HEK293 (cell line): ENCODE measurements at regions of chr5 and their contacts with region 1.

Region 1: DNA sequence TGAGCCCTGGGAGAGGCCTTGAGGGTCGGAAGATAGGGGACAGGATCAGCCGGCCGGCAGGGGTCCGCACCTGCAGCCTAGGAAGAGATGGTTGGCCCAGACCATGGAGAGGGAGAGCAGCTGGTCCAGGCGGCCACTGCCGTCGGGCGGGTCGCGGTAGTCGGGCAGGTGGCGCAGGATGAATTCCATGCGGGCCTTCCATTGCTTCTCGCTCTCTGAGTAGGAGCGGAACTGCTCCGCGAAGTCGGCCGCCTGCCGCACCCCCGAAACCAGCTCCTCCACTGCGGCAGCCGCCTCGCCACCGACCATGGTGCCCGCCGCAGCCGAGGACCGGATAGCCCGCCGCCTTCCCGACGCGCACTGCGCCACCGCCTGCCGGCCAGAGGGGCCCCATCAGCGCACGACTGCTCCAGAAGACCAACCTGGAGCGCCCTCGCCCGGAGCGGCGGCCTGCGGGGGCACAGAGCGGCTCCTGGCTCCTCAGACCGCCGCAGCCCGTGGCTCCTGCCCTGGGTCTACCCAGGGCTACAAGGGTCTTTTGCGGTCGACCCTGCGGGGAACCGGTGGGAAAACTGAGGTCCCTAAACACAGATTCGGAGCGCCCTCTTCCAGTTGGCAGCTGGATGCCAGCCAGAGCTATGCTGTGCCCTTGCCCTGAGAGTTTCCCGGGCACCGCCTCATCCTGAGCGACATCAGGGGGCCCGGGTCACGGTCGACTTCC is at the start of gene CDKN2AIPNL:
- H3K4me3 ChIP-seq: peak within 1 kb of the TSS; percentile 91
- H3K27ac ChIP-seq: peak within 1 kb of the TSS; percentile 63; the same call in 1 of the 2 replicates
- H3K4me1 ChIP-seq: peaks cover 10% of the 10 kb centered on the region
- CTCF ChIP-seq: peak; percentile 97

Region 2: DNA sequence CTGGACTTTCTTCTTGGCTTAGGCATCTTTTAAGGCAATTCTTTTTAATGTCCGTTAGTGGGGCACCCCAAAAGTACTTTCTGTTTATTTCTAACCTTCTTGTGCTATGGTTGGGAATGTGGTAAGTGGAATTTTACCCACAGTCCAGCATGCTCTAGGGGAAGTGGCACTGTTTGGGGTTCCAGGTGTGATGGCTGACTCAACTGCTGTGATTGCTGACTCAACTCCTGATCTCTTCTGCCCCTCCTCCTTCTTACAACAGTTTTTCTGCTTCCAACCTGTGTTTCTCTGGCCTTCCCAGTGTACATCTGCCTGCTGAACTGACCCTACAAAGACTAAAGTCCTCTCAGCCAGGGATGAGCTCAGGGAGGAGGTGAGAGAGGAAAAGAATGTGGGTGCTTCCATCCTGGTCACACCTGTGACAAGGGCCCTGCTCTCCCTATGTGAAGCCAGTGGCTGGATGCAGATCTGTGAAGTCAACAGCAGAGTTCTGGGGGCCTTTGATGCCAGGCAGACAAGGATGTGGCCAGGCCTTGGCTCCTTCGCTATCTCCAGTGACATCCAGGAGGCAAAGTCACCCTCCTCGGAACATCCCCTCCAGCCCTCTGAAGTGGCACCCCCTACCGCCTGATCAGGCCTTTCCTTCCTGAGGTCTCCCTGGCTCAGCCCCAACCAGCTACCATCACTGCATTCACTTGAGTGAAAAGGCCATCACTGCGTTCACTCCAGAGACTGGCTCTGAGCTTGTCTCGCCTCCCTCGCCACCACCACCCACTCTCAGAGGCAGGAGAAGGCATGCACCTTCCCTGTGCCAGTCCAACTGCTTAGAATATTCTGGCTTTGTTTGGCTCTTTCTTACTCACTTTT is 515.5 kb before region 1 on chr5:
- CTCF ChIA-PET with region 1: no interaction called
- POLR2A ChIA-PET with region 1: no interaction called
- H3K4me3 ChIP-seq: no peak overlapping the region
- H3K27ac ChIP-seq: no peak overlapping the region
- H3K4me1 ChIP-seq: no peaks in the 10 kb centered on the region
- CTCF ChIP-seq: no peak

Region 3: GRCh38 chr5:134252671-134253070 is 159.0 kb before region 1 on chr5:
- CTCF ChIA-PET with region 1: no interaction called
- POLR2A ChIA-PET with region 1: no interaction called
- H3K4me3 ChIP-seq: no peak overlapping the region
- H3K27ac ChIP-seq: no peak overlapping the region
- H3K4me1 ChIP-seq: no peaks in the 10 kb centered on the region
- CTCF ChIP-seq: no peak

Region 4: GRCh38 chr5:134511788-134512650 is 100.3 kb after region 1 on chr5:
- CTCF ChIA-PET with region 1: interaction called, 15 read pairs
- POLR2A ChIA-PET with region 1: interaction called, 16 read pairs
- H3K4me3 ChIP-seq: no peak overlapping the region
- H3K27ac ChIP-seq: no peak overlapping the region
- H3K4me1 ChIP-seq: peaks cover 9% of the 10 kb centered on the region; the same call in 1 of the 2 replicates
- CTCF ChIP-seq: peak; percentile 40; the same call in 1 of the 2 replicates

Region 5: DNA sequence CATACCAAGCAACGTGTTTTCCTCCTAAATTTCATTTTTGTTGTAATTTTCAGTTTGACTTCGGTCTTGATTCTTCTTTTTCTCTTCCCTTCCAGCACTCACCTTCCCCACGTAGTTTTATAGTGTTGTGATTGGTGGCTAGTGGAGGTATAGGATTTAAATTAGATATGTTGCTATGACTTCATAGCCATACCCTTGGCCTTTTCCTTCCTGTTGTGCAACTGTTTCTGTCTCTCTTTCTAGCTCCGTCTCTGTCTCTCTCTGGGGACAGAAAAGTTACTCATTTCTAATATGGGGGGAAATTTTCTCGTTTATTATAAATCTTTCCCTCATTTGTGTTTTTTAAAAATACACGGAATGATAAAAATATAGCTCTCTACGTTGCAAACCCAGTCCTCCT is 413.5 kb after region 1 on chr5:
- CTCF ChIA-PET with region 1: no interaction called
- POLR2A ChIA-PET with region 1: no interaction called
- H3K4me3 ChIP-seq: no peak overlapping the region
- H3K27ac ChIP-seq: no peak overlapping the region
- H3K4me1 ChIP-seq: no peaks in the 10 kb centered on the region
- CTCF ChIP-seq: no peak